SK-N-SH (cell line): ENCODE measurements at regions of chr22 and their contacts with region 1.

Region 1: GRCh38 chr22:20016734-20017621 is at the start of gene ARVCF:
- DNase-seq: peak; percentile 98
- H3K4me3 ChIP-seq: peak within 1 kb of the TSS; percentile 65 to 69
- H3K27ac ChIP-seq: peak within 1 kb of the TSS in 1 of 2 experiments; percentile 50; a peak in 1 of 4 replicates
- H3K4me1 ChIP-seq: peaks cover 0 to 51% of the 10 kb centered on the region in 2 experiments; a peak in 1 of 4 replicates
- H3K27me3 ChIP-seq: no peaks in the 10 kb centered on the region
- CTCF ChIP-seq: no peak
- EP300 ChIP-seq: no peak
- RAD21 ChIP-seq: no peak
- polyA plus RNA-seq, gene ARVCF: 27.4 and 33.0 TPM in 2 replicates

Region 2: DNA sequence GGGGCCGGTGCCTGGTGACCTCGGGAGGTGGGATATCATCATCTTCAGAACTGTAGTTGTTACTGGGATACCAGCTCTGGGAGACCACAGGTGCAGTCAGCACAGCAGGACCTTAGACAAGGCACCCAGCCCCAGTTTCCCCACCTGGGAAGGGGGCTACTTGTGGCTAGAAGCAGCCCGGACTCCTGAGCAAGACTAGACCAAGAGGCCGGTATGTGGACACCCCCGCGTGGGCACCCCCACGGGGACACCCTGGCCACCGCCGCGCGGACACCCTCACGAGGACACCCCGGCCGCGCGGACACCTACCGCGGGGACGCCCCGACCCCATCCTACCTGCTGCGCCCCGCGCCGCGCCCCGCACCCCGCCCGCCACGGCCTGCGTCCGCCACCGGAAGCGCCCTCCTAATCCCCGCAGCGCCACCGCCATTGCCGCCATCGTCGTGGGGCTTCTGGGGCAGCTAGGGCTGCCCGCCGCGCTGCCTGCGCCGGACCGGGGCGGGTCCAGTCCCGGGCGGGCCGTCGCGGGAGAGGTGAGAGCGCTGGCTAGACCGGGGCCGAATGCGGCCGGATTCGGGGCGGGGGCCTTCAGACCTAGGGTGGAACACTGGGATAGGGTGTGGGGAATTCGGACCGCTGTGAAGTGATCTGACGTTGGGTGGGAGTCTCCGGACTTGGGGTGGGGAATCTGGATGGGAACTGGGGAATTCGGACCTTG is 75.5 kb before region 1 on chr22 and contains the starts of genes COMT and TXNRD2:
- CTCF ChIA-PET with region 1: interaction called, 17 read pairs
- POLR2A ChIA-PET with region 1: no interaction called
- DNase-seq: peak; percentile 96
- H3K4me3 ChIP-seq: peak within 1 kb of the TSS; percentile 73 to 75
- H3K27ac ChIP-seq: peak within 1 kb of the TSS; percentile 91 to 96
- H3K4me1 ChIP-seq: peaks cover 14 to 23% of the 10 kb centered on the region in 2 experiments; a peak in 3 of 4 replicates
- H3K27me3 ChIP-seq: no peaks in the 10 kb centered on the region
- CTCF ChIP-seq: no peak
- EP300 ChIP-seq: 0 out of 4 replicates have a peak, but pooled peaks of 1 of the 2 experiments have one; percentile 11
- RAD21 ChIP-seq: no peak
- polyA plus RNA-seq, gene COMT: 205 and 343 TPM in 2 replicates
- polyA plus RNA-seq, gene TXNRD2: 33.5 and 34.7 TPM in 2 replicates

Region 3: DNA sequence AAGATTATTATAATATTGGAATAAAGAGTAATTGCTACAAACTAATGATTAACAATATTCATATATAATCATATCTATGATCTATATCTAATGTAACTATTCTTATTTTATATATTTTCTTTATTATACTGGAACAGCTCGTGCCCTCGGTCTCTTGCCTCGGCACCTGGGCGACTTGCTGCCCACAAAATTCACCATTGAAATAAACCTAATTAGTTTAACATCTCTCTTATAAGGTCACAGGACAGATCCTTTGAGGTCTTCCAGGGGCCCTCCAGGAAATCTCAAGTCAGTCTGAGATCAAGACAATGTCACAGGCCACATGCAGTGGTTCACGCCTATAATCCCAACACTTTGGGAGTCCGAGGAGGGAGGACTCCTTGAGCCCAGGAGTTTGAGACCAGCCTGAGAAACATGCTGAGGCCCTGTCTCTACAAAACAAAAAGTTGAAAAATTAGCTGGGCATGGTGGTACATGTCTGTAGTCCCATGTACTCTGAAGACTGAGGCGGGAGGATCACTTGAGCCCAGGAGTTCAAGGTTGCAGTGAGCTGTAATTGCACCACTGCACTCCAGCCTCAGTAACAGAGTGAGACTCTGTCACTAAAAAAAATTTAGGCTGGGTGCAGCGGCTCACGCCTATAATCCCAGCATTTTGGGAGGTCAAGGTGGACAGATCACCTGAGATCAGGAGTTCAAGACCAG is 68.8 kb before region 1 on chr22:
- CTCF ChIA-PET with region 1: interaction called, 19 read pairs
- POLR2A ChIA-PET with region 1: no interaction called
- DNase-seq: no peak
- H3K4me3 ChIP-seq: no peak overlapping the region
- H3K27ac ChIP-seq: peak overlapping the region in 1 of 2 experiments; percentile 71; a peak in 2 of 4 replicates
- H3K4me1 ChIP-seq: peaks cover 4 to 25% of the 10 kb centered on the region in 2 experiments; a peak in 3 of 4 replicates
- H3K27me3 ChIP-seq: no peaks in the 10 kb centered on the region
- CTCF ChIP-seq: no peak
- EP300 ChIP-seq: no peak
- RAD21 ChIP-seq: no peak

Region 4: GRCh38 chr22:19955241-19956128 is 61.5 kb before region 1 on chr22:
- CTCF ChIA-PET with region 1: interaction called, 501 read pairs
- POLR2A ChIA-PET with region 1: no interaction called
- DNase-seq: peak; percentile 15
- H3K4me3 ChIP-seq: no peak overlapping the region
- H3K27ac ChIP-seq: no peak overlapping the region
- H3K4me1 ChIP-seq: no peaks in the 10 kb centered on the region; a peak in 1 of 4 replicates
- H3K27me3 ChIP-seq: no peaks in the 10 kb centered on the region
- CTCF ChIP-seq: no peak
- EP300 ChIP-seq: no peak
- RAD21 ChIP-seq: no peak

Region 5: GRCh38 chr22:19970479-19971275 is 46.3 kb before region 1 on chr22:
- CTCF ChIA-PET with region 1: interaction called, 501 read pairs
- POLR2A ChIA-PET with region 1: interaction called, 63 read pairs
- DNase-seq: peak; percentile 91
- H3K4me3 ChIP-seq: peak overlapping the region in 1 of 2 experiments; percentile 39; a peak in 1 of 4 replicates
- H3K27ac ChIP-seq: peak overlapping the region in 1 of 2 experiments; percentile 35; a peak in 1 of 4 replicates
- H3K4me1 ChIP-seq: peaks cover 0 to 24% of the 10 kb centered on the region in 2 experiments; a peak in 1 of 4 replicates
- H3K27me3 ChIP-seq: no peaks in the 10 kb centered on the region
- CTCF ChIP-seq: peak; percentile 86
- EP300 ChIP-seq: no peak
- RAD21 ChIP-seq: peak; percentile 91

Region 6: GRCh38 chr22:19986410-19987341 is 30.3 kb before region 1 on chr22:
- CTCF ChIA-PET with region 1: interaction called, 224 read pairs
- POLR2A ChIA-PET with region 1: interaction called, 9 read pairs
- DNase-seq: peak; percentile 99
- H3K4me3 ChIP-seq: peak overlapping the region; percentile 83 to 87
- H3K27ac ChIP-seq: peak overlapping the region; percentile 36 to 87; a peak in 3 of 4 replicates
- H3K4me1 ChIP-seq: peaks cover 17 to 70% of the 10 kb centered on the region in 2 experiments; a peak in 3 of 4 replicates
- H3K27me3 ChIP-seq: no peaks in the 10 kb centered on the region
- CTCF ChIP-seq: no peak
- EP300 ChIP-seq: no peak
- RAD21 ChIP-seq: no peak

Region 7: DNA sequence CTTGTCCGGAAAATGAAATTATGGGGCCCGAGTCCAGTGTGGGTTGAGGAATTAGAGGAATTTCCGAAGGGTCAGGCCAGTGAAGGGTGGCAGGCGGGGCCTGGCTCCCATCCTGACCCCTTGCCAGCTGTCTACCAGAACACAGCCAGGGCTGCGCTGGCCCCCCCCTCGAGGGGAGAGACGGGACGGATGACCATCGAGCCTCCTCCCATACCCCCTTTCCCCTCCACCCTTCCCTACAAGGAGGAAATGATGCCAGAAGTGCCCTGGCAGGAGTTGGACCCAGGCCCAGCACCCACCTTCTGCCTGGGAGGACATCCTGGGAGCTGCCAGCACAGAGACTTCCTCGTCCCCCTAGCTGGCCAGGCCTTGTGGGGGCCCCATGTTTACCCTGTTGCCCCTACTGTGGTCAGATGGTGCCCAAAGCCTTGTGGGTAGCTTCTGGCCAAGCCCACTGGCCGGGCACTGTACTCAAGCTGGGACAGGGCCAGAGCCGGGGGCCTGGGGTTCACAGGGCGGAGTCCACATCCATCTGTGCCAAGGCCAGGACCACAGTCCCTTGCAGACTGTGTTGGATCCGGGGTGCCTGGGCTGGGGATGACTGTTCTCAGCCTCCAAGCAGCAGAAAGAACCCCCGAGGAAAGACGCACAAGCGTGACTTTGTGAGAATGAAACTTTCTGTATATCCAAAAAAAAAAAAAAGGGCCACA is 21.2 kb before region 1 on chr22:
- CTCF ChIA-PET with region 1: interaction called, 224 read pairs
- POLR2A ChIA-PET with region 1: interaction called, 4 read pairs
- DNase-seq: no peak
- H3K4me3 ChIP-seq: no peak overlapping the region
- H3K27ac ChIP-seq: peak overlapping the region; percentile 47 to 97
- H3K4me1 ChIP-seq: peaks cover 0 to 85% of the 10 kb centered on the region in 2 experiments; a peak in 2 of 4 replicates
- H3K27me3 ChIP-seq: no peaks in the 10 kb centered on the region
- CTCF ChIP-seq: no peak
- EP300 ChIP-seq: no peak
- RAD21 ChIP-seq: no peak